WTC11 (cell line): ENCODE measurements at regions of chr11 and their contacts with region 1.

Region 1: DNA sequence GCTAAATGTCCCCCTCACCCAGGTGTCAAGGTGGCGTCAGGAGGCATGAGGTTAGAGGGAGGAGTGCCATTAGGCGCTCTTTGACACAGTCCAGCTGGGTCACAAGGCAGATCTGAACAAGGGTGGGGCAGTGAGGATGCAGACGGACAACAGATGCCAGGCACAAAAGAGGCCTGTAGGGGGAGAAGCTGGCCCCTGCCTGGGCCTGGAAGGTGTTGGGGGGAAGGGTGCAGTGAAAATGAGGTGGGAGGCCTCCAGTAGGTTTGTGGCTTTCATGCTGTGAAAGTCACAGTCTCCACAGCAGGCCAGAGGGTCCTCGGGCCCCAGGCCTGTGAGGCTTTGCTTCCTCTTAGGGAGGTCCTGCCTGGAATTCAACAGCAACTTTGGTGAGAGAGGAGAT is 85.0 kb upstream of the PLET1 start:
- DNase-seq: peak; percentile 42
- ATAC-seq: peak; percentile 91
- H3K4me3 Mint-ChIP-seq: no peak overlapping the region
- H3K27ac Mint-ChIP-seq: no peak overlapping the region
- H3K4me1 Mint-ChIP-seq: peaks cover 6% of the 10 kb centered on the region
- H3K27me3 Mint-ChIP-seq: no peaks in the 10 kb centered on the region; the same call in 1 of the 2 replicates
- CTCF ChIP-seq: 0 out of 2 replicates have a peak, but pooled peaks have one; percentile 16

Region 2: DNA sequence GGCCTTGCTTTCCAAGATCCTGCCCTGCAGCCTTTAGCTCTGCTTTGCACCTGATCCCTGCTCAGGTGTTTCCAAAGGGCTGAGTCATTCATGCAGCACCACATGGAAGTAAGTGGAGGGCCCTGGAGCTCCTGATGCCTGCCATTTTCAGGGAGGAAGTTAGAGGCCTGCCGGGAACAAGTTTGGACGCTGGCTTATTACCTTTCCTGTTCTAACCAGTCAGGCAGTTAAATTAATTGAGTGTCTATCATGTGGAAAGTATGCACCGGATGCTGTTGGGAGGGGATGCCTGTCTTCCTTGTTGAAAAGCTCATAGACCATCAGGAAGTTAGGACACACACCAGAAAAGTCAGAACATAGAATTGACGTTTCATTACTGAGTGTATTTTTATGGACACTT is 11.3 kb before region 1 on chr11:
- CTCF ChIA-PET with region 1: interaction called, 10 read pairs
- POLR2A ChIA-PET with region 1: interaction called, 3 read pairs
- DNase-seq: no peak
- ATAC-seq: no peak
- H3K4me3 Mint-ChIP-seq: no peak overlapping the region
- H3K27ac Mint-ChIP-seq: no peak overlapping the region
- H3K4me1 Mint-ChIP-seq: no peaks in the 10 kb centered on the region
- H3K27me3 Mint-ChIP-seq: peaks cover 8% of the 10 kb centered on the region; the same call in 1 of the 2 replicates
- CTCF ChIP-seq: no peak

Region 3: GRCh38 chr11:112355726-112356125 is 10.0 kb after region 1 on chr11:
- CTCF ChIA-PET with region 1: interaction called, 19 read pairs
- POLR2A ChIA-PET with region 1: no interaction called
- DNase-seq: peak; percentile 61
- ATAC-seq: peak; percentile 74; the same call in 1 of the 2 replicates
- H3K4me3 Mint-ChIP-seq: no peak overlapping the region
- H3K27ac Mint-ChIP-seq: no peak overlapping the region
- H3K4me1 Mint-ChIP-seq: peaks cover 3% of the 10 kb centered on the region; the same call in 1 of the 2 replicates
- H3K27me3 Mint-ChIP-seq: peaks cover 2% of the 10 kb centered on the region; the same call in 1 of the 2 replicates
- CTCF ChIP-seq: no peak